Activated B cell treated with CpG ODN at 0.5 μM for 24 hours (primary cell): ENCODE measurements at regions of chrX and their contacts with region 1.

Region 1: GRCh38 chrX:9341291-9342201 is 123.3 kb upstream of the TBL1X start:
- DNase-seq: peak; percentile 51
- ATAC-seq: peak; percentile 69
- H3K4me3 Mint-ChIP-seq: peak overlapping the region; percentile 73
- H3K27ac Mint-ChIP-seq: peak overlapping the region; percentile 95
- H3K4me1 Mint-ChIP-seq: peaks cover 29% of the 10 kb centered on the region
- H3K27me3 Mint-ChIP-seq: no peaks in the 10 kb centered on the region
- CTCF ChIP-seq: no peak

Region 2: GRCh38 chrX:8971116-8971515 is 370.4 kb before region 1 on chrX:
- CTCF ChIA-PET with region 1: interaction called, 3 read pairs
- POLR2A ChIA-PET with region 1: interaction called, 9 read pairs
- intact Hi-C with region 1: loop called (anchors 2 kb)
- DNase-seq: no peak
- ATAC-seq: peak; percentile 54
- H3K4me3 Mint-ChIP-seq: no peak overlapping the region
- H3K27ac Mint-ChIP-seq: no peak overlapping the region
- H3K4me1 Mint-ChIP-seq: no peaks in the 10 kb centered on the region
- H3K27me3 Mint-ChIP-seq: peaks cover under 1% of the 10 kb centered on the region
- CTCF ChIP-seq: no peak

Region 3: DNA sequence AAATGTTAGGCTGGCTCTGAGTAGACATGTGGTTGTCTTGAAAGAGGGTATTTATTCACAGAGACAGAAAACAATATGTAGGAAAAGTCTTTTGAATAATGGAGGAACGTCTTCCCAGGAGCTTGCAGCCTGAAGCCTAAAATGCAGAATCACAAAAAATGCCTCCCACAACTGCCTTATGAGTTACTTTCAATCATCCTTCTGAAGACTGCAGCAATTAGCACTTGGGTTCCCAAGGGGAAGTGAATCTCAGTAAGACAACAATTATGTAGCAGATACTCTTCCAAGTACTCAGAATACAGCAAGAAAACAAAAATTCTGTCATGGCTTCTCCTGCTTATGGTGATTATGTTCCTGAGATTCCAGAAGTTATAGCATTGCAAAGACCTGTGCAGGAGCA is 43.3 kb before region 1 on chrX:
- CTCF ChIA-PET with region 1: no interaction called
- POLR2A ChIA-PET with region 1: no interaction called
- intact Hi-C with region 1: loop called (anchors 5 kb)
- DNase-seq: no peak
- ATAC-seq: no peak
- H3K4me3 Mint-ChIP-seq: no peak overlapping the region
- H3K27ac Mint-ChIP-seq: no peak overlapping the region
- H3K4me1 Mint-ChIP-seq: peaks cover 5% of the 10 kb centered on the region
- H3K27me3 Mint-ChIP-seq: peaks cover 10% of the 10 kb centered on the region
- CTCF ChIP-seq: no peak

Region 4: GRCh38 chrX:9464435-9465371 is 123.2 kb after region 1 on chrX and contains the start of gene TBL1X:
- CTCF ChIA-PET with region 1: interaction called, 18 read pairs
- POLR2A ChIA-PET with region 1: interaction called, 137 read pairs
- intact Hi-C with region 1: loop called (anchors 1 kb)
- DNase-seq: peak; percentile 66
- ATAC-seq: peak; percentile 70
- H3K4me3 Mint-ChIP-seq: peak within 1 kb of the TSS; percentile 78
- H3K27ac Mint-ChIP-seq: peak within 1 kb of the TSS; percentile 86
- H3K4me1 Mint-ChIP-seq: peaks cover 48% of the 10 kb centered on the region
- H3K27me3 Mint-ChIP-seq: no peaks in the 10 kb centered on the region
- CTCF ChIP-seq: no peak
- total RNA-seq, gene TBL1X: 37.6 and 38.5 TPM in 2 replicates

Region 5: DNA sequence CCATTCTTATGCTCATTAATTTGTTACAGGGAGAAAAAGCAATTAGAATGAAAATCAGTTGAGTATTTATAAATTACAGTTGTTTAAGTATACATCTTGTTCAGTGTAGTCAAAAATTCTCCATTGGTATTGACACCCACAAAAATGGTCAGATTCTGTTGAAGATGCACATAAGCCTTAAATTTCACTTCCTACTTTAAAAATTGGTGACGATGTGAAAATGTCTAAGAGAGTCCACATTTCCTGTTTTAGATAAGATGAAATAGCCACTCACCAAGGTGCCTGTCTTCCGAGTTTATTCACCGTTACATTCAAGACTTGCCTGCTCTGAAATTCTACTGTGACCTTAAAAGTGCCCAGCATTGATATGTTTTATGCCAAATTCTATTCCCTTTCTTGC is 330.5 kb after region 1 on chrX:
- CTCF ChIA-PET with region 1: no interaction called
- POLR2A ChIA-PET with region 1: interaction called, 8 read pairs
- intact Hi-C with region 1: loop called (anchors 1 kb)
- DNase-seq: no peak
- ATAC-seq: peak; percentile 80
- H3K4me3 Mint-ChIP-seq: peak overlapping the region; percentile 64
- H3K27ac Mint-ChIP-seq: peak overlapping the region; percentile 84
- H3K4me1 Mint-ChIP-seq: peaks cover 44% of the 10 kb centered on the region
- H3K27me3 Mint-ChIP-seq: no peaks in the 10 kb centered on the region
- CTCF ChIP-seq: no peak

Region 6: DNA sequence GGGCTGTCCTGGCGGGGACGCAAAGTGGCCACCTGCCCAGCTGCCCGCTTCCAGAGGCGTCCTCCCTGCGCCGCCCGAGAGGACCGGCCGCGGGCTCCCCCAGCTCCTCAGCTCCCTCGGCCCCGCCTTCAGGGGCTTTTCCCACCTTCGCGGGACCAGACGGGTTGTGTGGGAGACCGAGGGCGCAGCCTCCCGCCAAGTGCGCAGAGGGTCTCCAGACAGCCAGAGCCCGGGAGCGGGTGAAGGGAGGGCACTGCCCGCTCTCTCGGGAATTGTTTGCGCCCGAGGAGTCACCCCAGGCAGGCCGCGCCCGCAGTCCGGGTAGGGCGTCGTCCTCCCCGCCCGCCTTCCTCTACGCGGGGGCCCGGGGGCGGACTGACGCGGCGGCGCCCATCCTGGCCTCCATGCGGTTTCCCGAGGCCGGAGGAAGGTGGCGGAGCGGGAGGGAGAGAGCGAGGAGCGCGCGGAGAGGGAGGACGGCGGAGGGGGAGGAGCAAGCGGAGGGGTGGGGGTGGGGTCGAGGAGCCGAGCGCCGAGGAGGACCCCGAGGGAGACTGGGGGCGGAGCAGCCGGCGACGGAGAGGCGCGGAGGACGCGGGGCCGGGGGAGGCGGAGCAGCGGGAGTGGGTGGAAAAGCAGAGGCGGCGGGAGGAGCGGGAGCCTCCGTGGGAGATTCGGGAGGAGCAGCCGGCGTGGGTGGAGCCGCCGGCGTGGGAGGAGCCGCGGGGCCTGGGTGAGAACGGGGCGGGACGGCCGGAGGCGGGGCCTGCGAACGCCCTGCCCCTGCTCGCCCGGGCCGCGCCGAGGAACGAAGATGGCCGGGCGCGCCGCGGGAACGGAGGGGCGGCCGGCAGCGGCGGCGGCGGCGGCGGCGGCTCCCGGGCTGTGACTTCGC is 673.2 kb after region 1 on chrX:
- CTCF ChIA-PET with region 1: no interaction called
- POLR2A ChIA-PET with region 1: no interaction called
- intact Hi-C with region 1: loop called (anchors 10 kb)
- DNase-seq: peak; percentile 81
- ATAC-seq: peak; percentile 83
- H3K4me3 Mint-ChIP-seq: peak overlapping the region; percentile 83
- H3K27ac Mint-ChIP-seq: peak overlapping the region; percentile 69
- H3K4me1 Mint-ChIP-seq: peaks cover 63% of the 10 kb centered on the region
- H3K27me3 Mint-ChIP-seq: no peaks in the 10 kb centered on the region
- CTCF ChIP-seq: no peak